Activated T-helper 1 cell treated with anti-CD3 and anti-CD28 coated beads, Interleukin-12 subunit alpha, Interleukin-12 subunit beta, Interleukin-2, Interleukin-4 antibody, amounts not matched to agents 30 ng/mL and 10 ng/mL and 1 ng/mL, durations not matched to agents 14 hours and 24 hours and 36 hours (primary cell): ENCODE measurements at regions of chr9 and their contacts with region 1.

Region 1: DNA sequence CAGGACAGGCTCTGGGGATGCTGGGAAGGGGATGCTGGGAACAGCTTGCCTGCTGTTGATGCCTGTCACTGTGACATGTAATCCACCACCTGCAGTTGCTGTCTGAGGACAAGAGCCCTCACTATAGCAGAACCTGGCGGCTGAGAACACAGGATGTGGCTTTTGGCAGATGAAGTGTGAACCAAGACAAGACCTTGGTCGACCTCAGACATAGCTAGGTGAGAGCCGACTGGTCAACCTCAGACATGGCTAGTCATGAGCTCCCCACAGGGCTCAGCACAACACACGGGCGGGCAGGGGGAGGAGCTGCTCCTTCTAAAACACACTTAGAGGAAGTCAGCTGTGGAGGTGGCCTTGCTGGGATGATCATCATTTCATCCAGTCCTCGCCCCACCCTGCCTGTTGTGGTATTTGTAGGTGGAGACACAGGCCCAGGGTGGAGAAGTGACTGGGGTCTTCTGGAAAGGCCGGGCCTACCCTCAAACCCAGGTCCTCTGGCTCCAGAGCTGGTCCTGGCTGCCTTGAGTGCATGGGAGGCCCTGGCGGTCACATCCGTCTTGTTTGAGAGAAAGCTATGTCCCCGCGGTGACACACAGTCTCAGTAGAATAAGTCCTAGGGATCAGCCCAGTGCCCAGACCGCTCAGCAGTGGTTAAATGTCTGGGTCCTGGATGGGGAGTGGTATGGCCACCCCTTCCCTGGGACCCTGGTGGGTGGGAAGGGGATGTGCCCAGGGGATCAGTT is 6.1 kb downstream of the SUSD3 start:
- DNase-seq: peak; percentile 91
- H3K4me3 Mint-ChIP-seq: peak overlapping the region; percentile 91
- H3K27ac Mint-ChIP-seq: peak overlapping the region; percentile 96
- H3K4me1 Mint-ChIP-seq: peaks cover 84% of the 10 kb centered on the region
- H3K27me3 Mint-ChIP-seq: no peaks in the 10 kb centered on the region

Region 2: DNA sequence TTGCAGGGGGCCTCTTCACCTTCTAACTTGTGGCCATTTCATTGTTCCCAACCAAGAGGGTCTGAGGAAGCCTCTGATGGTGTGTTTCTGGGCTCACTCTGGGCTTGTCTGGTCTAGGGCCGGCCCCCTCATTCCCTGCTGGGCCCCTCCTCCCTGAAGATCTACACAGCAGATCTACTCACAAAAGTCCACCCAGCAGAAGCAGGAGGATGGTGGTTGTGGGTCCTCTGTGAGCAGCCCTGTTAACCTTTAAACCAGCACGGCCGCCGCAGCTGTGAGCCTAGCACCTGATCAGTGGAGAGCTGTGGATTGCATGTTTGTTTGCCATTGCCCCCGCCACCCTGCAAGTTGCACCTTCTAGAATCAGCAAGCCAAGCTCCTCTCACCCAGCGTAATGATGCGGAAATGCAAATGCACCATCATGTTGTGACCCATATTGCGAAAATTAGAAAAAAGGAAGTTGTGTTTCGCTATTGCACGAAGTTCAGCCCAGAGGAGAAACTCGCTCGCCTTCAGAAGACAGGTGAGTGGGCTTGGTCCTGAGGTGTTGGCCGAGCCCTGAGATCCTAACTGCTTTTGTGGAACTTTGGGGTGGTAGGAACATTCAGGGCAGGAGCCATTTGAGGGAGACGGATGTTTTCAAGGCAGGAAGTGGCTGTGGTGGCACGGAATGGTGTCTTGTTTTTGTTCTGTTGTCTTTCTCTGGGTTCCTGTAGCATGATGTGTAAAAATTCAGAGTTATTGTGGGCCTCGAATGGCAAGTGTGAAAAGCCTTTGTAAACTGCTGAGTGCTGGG is 100.5 kb before region 1 on chr9:
- intact Hi-C with region 1: loop called (anchors 2 kb)
- DNase-seq: peak; percentile 77
- H3K4me3 Mint-ChIP-seq: peak overlapping the region; percentile 98
- H3K27ac Mint-ChIP-seq: peak overlapping the region; percentile 97
- H3K4me1 Mint-ChIP-seq: peaks cover 69% of the 10 kb centered on the region
- H3K27me3 Mint-ChIP-seq: no peaks in the 10 kb centered on the region

Region 3: GRCh38 chr9:93028448-93029006 is 36.0 kb before region 1 on chr9:
- intact Hi-C with region 1: loop called (anchors 2 kb)
- DNase-seq: peak; percentile 69
- H3K4me3 Mint-ChIP-seq: peak overlapping the region; percentile 67
- H3K27ac Mint-ChIP-seq: peak overlapping the region; percentile 87
- H3K4me1 Mint-ChIP-seq: peaks cover 56% of the 10 kb centered on the region
- H3K27me3 Mint-ChIP-seq: no peaks in the 10 kb centered on the region

Region 4: GRCh38 chr9:93108291-93109041 is 43.9 kb after region 1 on chr9:
- intact Hi-C with region 1: loop called (anchors 1 kb)
- DNase-seq: peak; percentile 52
- H3K4me3 Mint-ChIP-seq: peak overlapping the region; percentile 58
- H3K27ac Mint-ChIP-seq: peak overlapping the region; percentile 75
- H3K4me1 Mint-ChIP-seq: peaks cover 53% of the 10 kb centered on the region
- H3K27me3 Mint-ChIP-seq: no peaks in the 10 kb centered on the region

Region 5: GRCh38 chr9:93143830-93144530 is 79.4 kb after region 1 on chr9:
- intact Hi-C with region 1: loop called (anchors 5 kb)
- DNase-seq: peak; percentile 43
- H3K4me3 Mint-ChIP-seq: no peak overlapping the region
- H3K27ac Mint-ChIP-seq: peak overlapping the region; percentile 93
- H3K4me1 Mint-ChIP-seq: peaks cover 38% of the 10 kb centered on the region
- H3K27me3 Mint-ChIP-seq: no peaks in the 10 kb centered on the region